CD8-positive, alpha-beta T cell (primary cell): ENCODE measurements at regions of chr19 and their contacts with region 1.

Region 1: GRCh38 chr19:19192078-19192882 is at the starts of genes BORCS8 and RFXANK:
- DNase-seq: peak; percentile 97 to 100 (median 98)
- ATAC-seq: peak; percentile 91
- H3K4me3 ChIP-seq: peak within 1 kb of the TSS; percentile 100
- H3K4me3 Mint-ChIP-seq: peak within 1 kb of the TSS; percentile 96
- H3K27ac ChIP-seq: peak within 1 kb of the TSS; percentile 98 to 100
- H3K27ac Mint-ChIP-seq: peak within 1 kb of the TSS; percentile 98
- H3K4me1 ChIP-seq: peaks cover 36% of the 10 kb centered on the region
- H3K4me1 Mint-ChIP-seq: peaks cover 52% of the 10 kb centered on the region
- H3K27me3 ChIP-seq: no peaks in the 10 kb centered on the region
- H3K27me3 Mint-ChIP-seq: no peaks in the 10 kb centered on the region
- CTCF ChIP-seq: no peak
- total RNA-seq, gene BORCS8: 6.6 to 13.6 TPM
- total RNA-seq, gene RFXANK: 33.4 to 38.8 TPM

Region 2: GRCh38 chr19:18419195-18419698 is 773.0 kb before region 1 on chr19 and contains the start of gene SSBP4:
- CTCF ChIA-PET with region 1: no interaction called
- POLR2A ChIA-PET with region 1: no interaction called
- intact Hi-C with region 1: loop called in 1 of 2 experiments (anchors 5 kb)
- DNase-seq: peak; percentile 43 to 87 (median 61)
- ATAC-seq: peak; percentile 50
- H3K4me3 ChIP-seq: peak within 1 kb of the TSS; percentile 55 to 74
- H3K4me3 Mint-ChIP-seq: peak within 1 kb of the TSS; percentile 84
- H3K27ac ChIP-seq: peak within 1 kb of the TSS in 1 of 2 experiments; percentile 74
- H3K27ac Mint-ChIP-seq: peak within 1 kb of the TSS; percentile 91
- H3K4me1 ChIP-seq: peaks cover 87% of the 10 kb centered on the region
- H3K4me1 Mint-ChIP-seq: peaks cover 77% of the 10 kb centered on the region
- H3K27me3 ChIP-seq: peaks cover 0 to 7% of the 10 kb centered on the region in 2 experiments
- H3K27me3 Mint-ChIP-seq: peaks cover 14% of the 10 kb centered on the region
- CTCF ChIP-seq: no peak
- total RNA-seq, gene SSBP4: 49.9 to 58.2 TPM

Region 3: GRCh38 chr19:19063183-19064097 is 128.8 kb before region 1 on chr19 and contains the start of gene SLC25A42:
- CTCF ChIA-PET with region 1: no interaction called
- POLR2A ChIA-PET with region 1: no interaction called
- intact Hi-C with region 1: loop called (anchors 1 kb)
- DNase-seq: peak; percentile 97 to 100 (median 99)
- ATAC-seq: peak; percentile 90
- H3K4me3 ChIP-seq: peak within 1 kb of the TSS; percentile 61 to 87
- H3K4me3 Mint-ChIP-seq: peak within 1 kb of the TSS; percentile 89
- H3K27ac ChIP-seq: peak within 1 kb of the TSS; percentile 47 to 77
- H3K27ac Mint-ChIP-seq: peak within 1 kb of the TSS; percentile 88
- H3K4me1 ChIP-seq: peaks cover 23% of the 10 kb centered on the region
- H3K4me1 Mint-ChIP-seq: peaks cover 32% of the 10 kb centered on the region
- H3K27me3 ChIP-seq: no peaks in the 10 kb centered on the region
- H3K27me3 Mint-ChIP-seq: no peaks in the 10 kb centered on the region
- CTCF ChIP-seq: no peak
- total RNA-seq, gene SLC25A42: 8.3 to 10.6 TPM

Region 4: DNA sequence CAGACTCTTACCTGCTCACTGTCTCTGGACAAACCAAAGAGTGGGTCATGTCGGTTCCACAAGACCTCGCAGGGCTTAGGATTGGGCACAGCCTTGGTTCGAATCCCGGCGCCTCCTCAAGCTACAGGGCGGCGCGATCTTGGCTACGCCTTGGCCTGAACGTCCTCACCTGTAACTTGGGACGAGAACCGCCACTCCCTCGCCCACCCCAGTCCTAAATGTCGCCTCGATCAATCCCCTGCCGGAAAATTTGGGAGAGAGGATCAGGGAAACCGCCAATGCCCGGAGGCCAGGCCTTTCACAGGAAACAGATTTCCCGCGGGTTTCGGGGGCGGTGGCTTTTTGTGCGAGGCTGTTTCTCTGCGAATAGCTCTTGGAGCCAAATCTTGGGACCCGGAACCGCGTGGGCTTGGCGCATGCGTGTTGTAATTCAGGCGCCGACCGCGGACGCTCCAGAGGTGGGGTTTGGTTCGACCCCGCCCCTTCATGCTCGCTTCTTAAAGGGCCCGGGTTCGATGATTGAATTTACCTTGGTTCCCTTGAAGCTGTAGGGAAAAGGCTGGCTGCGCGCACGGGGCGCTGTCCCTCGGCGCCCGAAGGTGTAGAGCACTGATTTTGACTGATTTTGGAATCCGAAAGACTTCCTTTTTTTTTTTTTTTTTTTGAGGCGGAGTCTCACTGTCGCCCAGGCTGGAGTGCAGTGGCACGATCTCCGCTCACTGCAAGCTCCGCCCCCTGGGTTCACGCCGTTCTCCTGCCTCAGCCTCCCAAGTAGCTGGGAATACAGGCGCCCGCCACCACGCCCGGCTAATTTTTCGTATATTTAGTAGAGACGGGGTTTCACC is 11.0 kb after region 1 on chr19 and contains the start of gene NR2C2AP:
- CTCF ChIA-PET with region 1: interaction called, 6 read pairs
- POLR2A ChIA-PET with region 1: interaction called, 38 read pairs
- intact Hi-C with region 1: loop called (anchors 1 kb)
- DNase-seq: peak; percentile 79 to 96 (median 93)
- ATAC-seq: peak; percentile 95
- H3K4me3 ChIP-seq: peak within 1 kb of the TSS; percentile 78 to 96
- H3K4me3 Mint-ChIP-seq: peak within 1 kb of the TSS; percentile 91
- H3K27ac ChIP-seq: peak within 1 kb of the TSS; percentile 65 to 80
- H3K27ac Mint-ChIP-seq: peak within 1 kb of the TSS; percentile 90
- H3K4me1 ChIP-seq: peaks cover 27% of the 10 kb centered on the region
- H3K4me1 Mint-ChIP-seq: peaks cover 28% of the 10 kb centered on the region
- H3K27me3 ChIP-seq: peaks cover 0 to 5% of the 10 kb centered on the region in 2 experiments
- H3K27me3 Mint-ChIP-seq: peaks cover 3% of the 10 kb centered on the region
- CTCF ChIP-seq: no peak
- total RNA-seq, gene NR2C2AP: 9.5 to 12.5 TPM

Region 5: DNA sequence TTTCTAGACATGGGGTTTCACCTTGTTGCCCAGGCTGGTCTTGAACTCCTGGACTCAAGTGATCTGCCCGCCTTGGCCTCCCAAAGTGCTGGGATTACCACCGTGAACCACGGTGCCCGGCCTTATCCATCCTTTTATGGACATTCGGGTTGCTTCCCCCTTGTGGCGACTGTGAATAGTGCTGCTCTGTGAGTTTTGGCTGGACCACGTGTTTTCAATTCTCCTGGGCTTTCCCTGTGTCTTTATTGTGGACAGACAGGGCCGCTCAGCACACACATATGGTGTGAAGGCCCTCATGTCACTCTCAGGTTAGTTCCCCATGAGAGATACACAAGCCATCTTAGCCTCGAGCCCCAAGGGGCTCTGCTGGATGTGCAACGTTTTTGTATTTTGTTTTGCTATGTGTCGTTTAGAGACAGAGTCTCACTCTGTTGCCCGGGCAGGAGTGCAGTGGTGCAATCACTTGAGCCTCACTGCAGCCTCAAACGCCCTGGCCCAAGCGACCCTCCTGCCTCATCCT is 168.9 kb after region 1 on chr19:
- CTCF ChIA-PET with region 1: no interaction called
- POLR2A ChIA-PET with region 1: no interaction called
- intact Hi-C with region 1: loop called in 1 of 2 experiments (anchors 5 kb)
- DNase-seq: peak; percentile 28 to 88 (median 69)
- ATAC-seq: peak; percentile 64
- H3K4me3 ChIP-seq: no peak overlapping the region
- H3K4me3 Mint-ChIP-seq: peak overlapping the region; percentile 36
- H3K27ac ChIP-seq: no peak overlapping the region
- H3K27ac Mint-ChIP-seq: peak overlapping the region; percentile 23
- H3K4me1 ChIP-seq: peaks cover 27% of the 10 kb centered on the region
- H3K4me1 Mint-ChIP-seq: peaks cover 37% of the 10 kb centered on the region
- H3K27me3 ChIP-seq: no peaks in the 10 kb centered on the region
- H3K27me3 Mint-ChIP-seq: no peaks in the 10 kb centered on the region
- CTCF ChIP-seq: peak; percentile 72

Region 6: GRCh38 chr19:19404879-19405860 is 212.9 kb after region 1 on chr19 and contains the start of gene GATAD2A:
- CTCF ChIA-PET with region 1: no interaction called
- POLR2A ChIA-PET with region 1: interaction called, 4 read pairs
- intact Hi-C with region 1: loop called (anchors 1 to 10 kb)
- DNase-seq: peak; percentile 81 to 98 (median 92)
- ATAC-seq: peak; percentile 89
- H3K4me3 ChIP-seq: peak within 1 kb of the TSS; percentile 67 to 85
- H3K4me3 Mint-ChIP-seq: peak within 1 kb of the TSS; percentile 97
- H3K27ac ChIP-seq: peak within 1 kb of the TSS; percentile 70 to 86
- H3K27ac Mint-ChIP-seq: peak within 1 kb of the TSS; percentile 89
- H3K4me1 ChIP-seq: peaks cover 44% of the 10 kb centered on the region
- H3K4me1 Mint-ChIP-seq: peaks cover 62% of the 10 kb centered on the region
- H3K27me3 ChIP-seq: no peaks in the 10 kb centered on the region
- H3K27me3 Mint-ChIP-seq: no peaks in the 10 kb centered on the region
- CTCF ChIP-seq: no peak
- total RNA-seq, gene GATAD2A: 135 to 142 TPM